ENCODE measurements at regions of chr20 and their contacts with region 1.

Region 1: DNA sequence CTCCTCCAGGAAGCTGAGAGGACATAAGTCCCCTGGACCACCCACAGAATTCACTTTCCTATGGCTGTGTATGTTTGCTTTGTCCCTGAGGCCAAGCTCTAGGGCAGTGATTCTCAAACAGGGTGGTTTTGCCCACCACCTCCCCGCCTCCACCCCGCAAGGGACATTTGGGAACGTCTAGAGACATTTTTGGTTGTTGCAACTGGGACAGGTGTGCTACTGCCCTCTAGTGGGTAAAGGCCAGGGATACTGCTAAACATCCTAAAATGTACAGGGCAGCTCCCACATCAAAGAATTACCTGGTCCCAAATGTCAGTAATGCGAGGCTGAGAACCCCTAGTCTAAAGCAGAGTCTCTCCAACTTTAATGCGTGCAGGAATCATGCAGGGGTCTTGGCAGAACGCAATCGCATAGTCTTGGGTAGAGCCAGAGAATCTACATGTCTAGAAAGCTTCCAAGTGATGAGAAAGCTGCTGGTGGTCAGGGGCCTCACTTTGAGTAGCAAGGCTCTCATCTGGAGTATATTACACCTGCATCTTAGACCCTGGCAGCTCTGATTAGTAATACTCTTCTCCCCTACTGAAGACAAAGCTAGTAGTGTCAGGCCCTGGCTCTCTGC is 5.1 kb downstream of the KCNS1 start:
- DNase-seq: peak; percentile 18 to 78 (median 62)
- ATAC-seq: peak; percentile 69
- H3K4me3 ChIP-seq: no peak overlapping the region
- H3K4me3 Mint-ChIP-seq: no peak overlapping the region
- H3K27ac ChIP-seq: no peak overlapping the region
- H3K27ac Mint-ChIP-seq: no peak overlapping the region
- H3K4me1 ChIP-seq: peaks cover 10% of the 10 kb centered on the region
- H3K4me1 Mint-ChIP-seq: peaks cover 17% of the 10 kb centered on the region
- H3K27me3 ChIP-seq: peaks cover 2 to 16% of the 10 kb centered on the region in 2 experiments
- H3K27me3 Mint-ChIP-seq: peaks cover 28% of the 10 kb centered on the region
- CTCF ChIP-seq: peak; percentile 74

Region 2: GRCh38 chr20:44747166-44748004 is 348.5 kb before region 1 on chr20:
- CTCF ChIA-PET with region 1: interaction called, 9 read pairs
- POLR2A ChIA-PET with region 1: no interaction called
- intact Hi-C with region 1: loop called in 1 of 2 experiments (anchors 10 kb)
- DNase-seq: peak; percentile 23 to 68 (median 56)
- ATAC-seq: peak; percentile 59
- H3K4me3 ChIP-seq: no peak overlapping the region
- H3K4me3 Mint-ChIP-seq: peak overlapping the region; percentile 51
- H3K27ac ChIP-seq: no peak overlapping the region
- H3K27ac Mint-ChIP-seq: no peak overlapping the region
- H3K4me1 ChIP-seq: peaks cover 8% of the 10 kb centered on the region
- H3K4me1 Mint-ChIP-seq: peaks cover 11% of the 10 kb centered on the region
- H3K27me3 ChIP-seq: peaks cover 5 to 6% of the 10 kb centered on the region in 2 experiments
- H3K27me3 Mint-ChIP-seq: peaks cover 38% of the 10 kb centered on the region
- CTCF ChIP-seq: peak; percentile 47

Region 3: DNA sequence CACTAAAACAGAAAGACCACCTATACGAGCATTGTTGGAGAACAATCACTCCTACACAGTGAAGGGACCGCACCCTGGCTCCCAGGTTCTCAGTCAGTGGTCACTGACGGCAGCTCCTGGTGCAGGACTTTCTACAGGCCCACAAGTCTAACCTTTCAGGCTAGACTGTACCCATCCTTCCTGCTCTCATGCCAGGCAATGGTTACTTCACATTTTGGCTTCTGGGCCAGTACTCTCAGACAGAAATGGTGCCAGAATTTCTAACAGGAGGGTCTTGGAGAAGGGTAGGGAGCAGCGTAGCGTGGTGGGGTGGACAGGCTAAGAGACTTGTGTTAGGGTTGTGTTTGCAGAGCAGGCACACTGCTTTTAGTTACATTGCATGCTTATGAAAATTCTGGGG is 147.8 kb before region 1 on chr20:
- CTCF ChIA-PET with region 1: interaction called, 10 read pairs
- POLR2A ChIA-PET with region 1: no interaction called
- intact Hi-C with region 1: no loop called
- DNase-seq: no peak
- ATAC-seq: no peak
- H3K4me3 ChIP-seq: no peak overlapping the region
- H3K4me3 Mint-ChIP-seq: no peak overlapping the region
- H3K27ac ChIP-seq: no peak overlapping the region
- H3K27ac Mint-ChIP-seq: no peak overlapping the region
- H3K4me1 ChIP-seq: no peaks in the 10 kb centered on the region
- H3K4me1 Mint-ChIP-seq: peaks cover 9% of the 10 kb centered on the region
- H3K27me3 ChIP-seq: no peaks in the 10 kb centered on the region
- H3K27me3 Mint-ChIP-seq: no peaks in the 10 kb centered on the region
- CTCF ChIP-seq: no peak

Region 4: GRCh38 chr20:45011108-45011526 is 84.7 kb before region 1 on chr20:
- CTCF ChIA-PET with region 1: interaction called, 22 read pairs
- POLR2A ChIA-PET with region 1: interaction called, 3 read pairs
- intact Hi-C with region 1: loop called (anchors 1 kb)
- DNase-seq: peak in 8 of 9 experiments; percentile 14 to 74 (median 57)
- ATAC-seq: peak; percentile 66
- H3K4me3 ChIP-seq: no peak overlapping the region
- H3K4me3 Mint-ChIP-seq: no peak overlapping the region
- H3K27ac ChIP-seq: peak overlapping the region in 1 of 2 experiments; percentile 29
- H3K27ac Mint-ChIP-seq: peak overlapping the region; percentile 35
- H3K4me1 ChIP-seq: peaks cover 23% of the 10 kb centered on the region
- H3K4me1 Mint-ChIP-seq: peaks cover 70% of the 10 kb centered on the region
- H3K27me3 ChIP-seq: no peaks in the 10 kb centered on the region
- H3K27me3 Mint-ChIP-seq: no peaks in the 10 kb centered on the region
- CTCF ChIP-seq: peak; percentile 74

Region 5: GRCh38 chr20:45044084-45044573 is 51.7 kb before region 1 on chr20:
- CTCF ChIA-PET with region 1: interaction called, 96 read pairs
- POLR2A ChIA-PET with region 1: interaction called, 8 read pairs
- intact Hi-C with region 1: loop called (anchors 1 kb)
- DNase-seq: peak in 5 of 9 experiments; percentile 30 to 82 (median 42)
- ATAC-seq: peak; percentile 86
- H3K4me3 ChIP-seq: no peak overlapping the region
- H3K4me3 Mint-ChIP-seq: no peak overlapping the region
- H3K27ac ChIP-seq: peak overlapping the region in 1 of 2 experiments; percentile 22
- H3K27ac Mint-ChIP-seq: peak overlapping the region; percentile 33
- H3K4me1 ChIP-seq: peaks cover 40% of the 10 kb centered on the region
- H3K4me1 Mint-ChIP-seq: peaks cover 79% of the 10 kb centered on the region
- H3K27me3 ChIP-seq: no peaks in the 10 kb centered on the region
- H3K27me3 Mint-ChIP-seq: no peaks in the 10 kb centered on the region
- CTCF ChIP-seq: peak; percentile 90

Region 6: GRCh38 chr20:45070932-45071632 is 24.8 kb before region 1 on chr20:
- CTCF ChIA-PET with region 1: interaction called, 16 read pairs
- POLR2A ChIA-PET with region 1: no interaction called
- intact Hi-C with region 1: no loop called
- DNase-seq: no peak
- ATAC-seq: no peak
- H3K4me3 ChIP-seq: no peak overlapping the region
- H3K4me3 Mint-ChIP-seq: no peak overlapping the region
- H3K27ac ChIP-seq: no peak overlapping the region
- H3K27ac Mint-ChIP-seq: peak overlapping the region; percentile 66
- H3K4me1 ChIP-seq: peaks cover 22% of the 10 kb centered on the region
- H3K4me1 Mint-ChIP-seq: peaks cover 65% of the 10 kb centered on the region
- H3K27me3 ChIP-seq: no peaks in the 10 kb centered on the region
- H3K27me3 Mint-ChIP-seq: no peaks in the 10 kb centered on the region
- CTCF ChIP-seq: no peak

Region 7: DNA sequence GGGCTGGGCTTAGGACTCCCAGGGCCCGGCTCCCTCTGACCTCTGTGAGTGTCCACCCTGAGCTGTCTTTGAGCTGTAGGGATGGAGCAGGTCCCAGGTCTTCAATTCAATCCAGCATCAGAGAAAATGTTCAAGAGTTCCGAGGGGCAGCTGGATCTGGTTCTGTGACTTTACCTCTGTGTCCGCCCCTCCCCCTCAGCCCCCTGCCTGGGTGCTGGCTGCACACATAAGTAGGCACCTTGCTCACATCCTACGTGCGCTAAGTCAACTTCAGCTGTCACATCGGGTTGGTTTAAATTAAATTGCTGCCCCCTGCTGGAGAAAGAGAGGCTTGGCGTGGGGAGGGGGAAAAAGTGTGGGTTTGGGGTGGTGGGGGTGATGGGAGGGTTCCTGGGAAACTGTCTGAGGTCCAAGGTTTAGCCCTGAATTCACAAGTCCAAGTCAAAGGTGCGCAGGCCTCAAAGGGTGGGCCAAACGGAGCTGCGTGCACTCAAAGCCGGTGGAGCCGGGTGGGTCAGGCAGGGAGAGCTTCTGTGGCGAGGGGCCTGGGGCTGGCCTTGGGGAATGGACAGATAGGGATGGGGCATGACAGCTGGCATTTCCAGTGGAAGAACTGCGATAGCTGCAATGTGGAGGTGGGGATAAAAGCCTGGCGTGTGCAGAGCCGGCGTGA is 16.1 kb after region 1 on chr20:
- CTCF ChIA-PET with region 1: interaction called, 34 read pairs
- POLR2A ChIA-PET with region 1: interaction called, 4 read pairs
- intact Hi-C with region 1: no loop called
- DNase-seq: peak in 1 of 9 experiments; percentile 27
- ATAC-seq: no peak
- H3K4me3 ChIP-seq: no peak overlapping the region
- H3K4me3 Mint-ChIP-seq: no peak overlapping the region
- H3K27ac ChIP-seq: no peak overlapping the region
- H3K27ac Mint-ChIP-seq: no peak overlapping the region
- H3K4me1 ChIP-seq: no peaks in the 10 kb centered on the region
- H3K4me1 Mint-ChIP-seq: peaks cover 8% of the 10 kb centered on the region
- H3K27me3 ChIP-seq: no peaks in the 10 kb centered on the region
- H3K27me3 Mint-ChIP-seq: peaks cover 11% of the 10 kb centered on the region
- CTCF ChIP-seq: no peak

Region 8: DNA sequence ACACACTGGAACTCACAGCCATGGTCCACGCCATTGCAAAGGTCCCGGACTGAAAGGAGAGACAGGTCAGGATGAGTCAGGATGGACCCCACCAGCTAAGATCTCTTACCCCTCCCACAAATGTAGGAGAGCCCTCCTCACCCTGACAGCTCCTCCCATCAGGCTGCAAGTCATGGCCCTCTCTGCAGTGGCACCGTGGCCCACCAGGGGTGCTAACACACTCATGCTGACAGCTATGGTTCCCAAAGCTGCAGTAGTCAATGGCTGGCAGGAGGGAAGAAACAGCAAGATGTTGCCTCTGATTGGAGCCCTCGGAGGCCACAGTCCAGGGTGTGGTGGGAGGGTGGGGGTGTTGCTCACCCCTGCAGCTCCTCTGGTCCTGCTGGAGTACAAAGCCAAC is 205.1 kb after region 1 on chr20:
- CTCF ChIA-PET with region 1: no interaction called
- POLR2A ChIA-PET with region 1: no interaction called
- intact Hi-C with region 1: no loop called
- DNase-seq: peak in 2 of 9 experiments; percentile 17 to 36
- ATAC-seq: peak; percentile 71
- H3K4me3 ChIP-seq: no peak overlapping the region
- H3K4me3 Mint-ChIP-seq: no peak overlapping the region
- H3K27ac ChIP-seq: no peak overlapping the region
- H3K27ac Mint-ChIP-seq: no peak overlapping the region
- H3K4me1 ChIP-seq: no peaks in the 10 kb centered on the region
- H3K4me1 Mint-ChIP-seq: no peaks in the 10 kb centered on the region
- H3K27me3 ChIP-seq: peaks cover 0 to 5% of the 10 kb centered on the region in 2 experiments
- H3K27me3 Mint-ChIP-seq: peaks cover 41% of the 10 kb centered on the region
- CTCF ChIP-seq: peak; percentile 13